ENCODE measurements at regions of chr1 and their contacts with region 1.

Region 1: DNA sequence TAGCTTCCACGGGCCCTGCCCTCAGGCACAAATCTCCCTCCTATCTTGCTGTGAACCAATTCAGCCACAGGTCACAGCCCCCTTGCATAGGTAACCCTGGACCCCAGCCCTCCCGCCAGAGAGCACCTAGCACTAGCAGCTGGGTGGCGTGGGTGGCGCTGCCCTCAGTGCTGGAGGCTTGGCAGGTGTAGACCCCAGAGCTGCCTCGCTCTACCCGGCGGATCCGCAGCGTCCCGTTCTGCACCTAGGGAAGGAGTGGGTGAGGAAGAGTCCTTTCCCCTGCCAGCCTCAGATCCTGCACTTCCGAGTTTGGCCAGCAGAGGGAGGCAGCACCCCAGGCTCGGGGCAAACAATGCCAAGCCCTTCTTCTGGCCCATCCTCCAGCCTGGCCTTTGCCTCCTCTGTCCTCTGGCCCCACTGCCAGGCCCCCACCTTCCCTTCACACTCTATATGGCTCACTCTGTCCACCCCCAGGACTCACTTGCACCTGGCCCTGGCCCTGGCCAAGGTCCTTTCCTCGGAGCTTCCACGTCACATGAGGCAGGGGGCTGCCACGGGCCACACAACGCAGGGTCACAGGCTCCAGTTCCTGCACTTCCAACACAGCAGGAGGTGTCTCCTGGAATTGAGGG is 9.0 kb downstream of the IGSF9 start:
- DNase-seq: peak; percentile 30
- ATAC-seq: peak; percentile 87
- H3K4me3 ChIP-seq: no peak overlapping the region
- H3K27ac ChIP-seq: no peak overlapping the region
- H3K4me1 ChIP-seq: peaks cover 13% of the 10 kb centered on the region
- H3K27me3 ChIP-seq: peaks cover 13 to 51% of the 10 kb centered on the region in 2 experiments; a peak in 4 of 5 replicates
- CTCF ChIP-seq: peak; percentile 99
- EP300 ChIP-seq: no peak
- POLR2A ChIP-seq: no peak
- RAD21 ChIP-seq: peak; percentile 95

Region 2: DNA sequence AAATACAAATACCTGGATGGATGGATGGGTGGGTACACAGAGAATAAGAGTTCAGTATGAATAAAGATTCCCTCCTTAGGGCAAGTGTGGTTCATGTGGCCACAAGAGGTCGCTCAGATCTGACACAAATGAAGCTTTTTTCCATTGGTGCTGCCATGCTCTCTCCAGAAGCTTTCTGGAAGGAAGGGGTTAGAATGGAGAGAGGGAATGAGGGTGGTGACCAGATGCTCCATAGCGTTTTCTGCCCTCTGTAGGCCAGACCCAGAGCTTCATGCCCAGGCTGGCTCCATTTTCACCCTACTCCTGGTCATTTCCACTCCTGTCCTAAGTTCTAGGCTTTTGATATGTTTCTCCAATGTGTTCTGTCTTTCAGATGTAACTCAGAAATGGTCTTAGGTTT is 137.5 kb before region 1 on chr1:
- CTCF ChIA-PET with region 1: no interaction called
- POLR2A ChIA-PET with region 1: no interaction called
- in situ Hi-C with region 1: no loop called
- intact Hi-C with region 1: loop called (anchors 5 kb)
- DNase-seq: peak; percentile 70
- ATAC-seq: peak; percentile 93
- H3K4me3 ChIP-seq: no peak overlapping the region
- H3K27ac ChIP-seq: no peak overlapping the region
- H3K4me1 ChIP-seq: no peaks in the 10 kb centered on the region
- H3K27me3 ChIP-seq: peaks cover 5 to 7% of the 10 kb centered on the region in 2 experiments; a peak in 2 of 5 replicates
- CTCF ChIP-seq: peak; percentile 62
- EP300 ChIP-seq: no peak
- POLR2A ChIP-seq: no peak
- RAD21 ChIP-seq: peak; percentile 47; the same call in 1 of the 2 replicates

Region 3: GRCh38 chr1:159960721-159961381 is 24.5 kb after region 1 on chr1:
- CTCF ChIA-PET with region 1: no interaction called
- POLR2A ChIA-PET with region 1: no interaction called
- in situ Hi-C with region 1: no loop called
- intact Hi-C with region 1: no loop called
- DNase-seq: no peak
- ATAC-seq: no peak
- H3K4me3 ChIP-seq: no peak overlapping the region
- H3K27ac ChIP-seq: no peak overlapping the region
- H3K4me1 ChIP-seq: no peaks in the 10 kb centered on the region
- H3K27me3 ChIP-seq: peaks cover 0 to 25% of the 10 kb centered on the region in 2 experiments; a peak in 3 of 5 replicates
- CTCF ChIP-seq: no peak
- EP300 ChIP-seq: no peak
- POLR2A ChIP-seq: no peak
- RAD21 ChIP-seq: no peak

Region 4: GRCh38 chr1:160078512-160079195 is 142.3 kb after region 1 on chr1:
- CTCF ChIA-PET with region 1: interaction called, 6 read pairs
- POLR2A ChIA-PET with region 1: no interaction called
- in situ Hi-C with region 1: loop called (anchors 5 kb)
- intact Hi-C with region 1: loop called (anchors 5 kb)
- DNase-seq: peak; percentile 61
- ATAC-seq: peak; percentile 90
- H3K4me3 ChIP-seq: 0 out of 6 replicates have a peak overlapping the region, but pooled peaks of 1 of the 3 experiments have one; percentile 32
- H3K27ac ChIP-seq: no peak overlapping the region
- H3K4me1 ChIP-seq: peaks cover 64% of the 10 kb centered on the region
- H3K27me3 ChIP-seq: no peaks in the 10 kb centered on the region
- CTCF ChIP-seq: peak; percentile 90
- EP300 ChIP-seq: no peak
- POLR2A ChIP-seq: no peak
- RAD21 ChIP-seq: peak; percentile 80

Region 5: DNA sequence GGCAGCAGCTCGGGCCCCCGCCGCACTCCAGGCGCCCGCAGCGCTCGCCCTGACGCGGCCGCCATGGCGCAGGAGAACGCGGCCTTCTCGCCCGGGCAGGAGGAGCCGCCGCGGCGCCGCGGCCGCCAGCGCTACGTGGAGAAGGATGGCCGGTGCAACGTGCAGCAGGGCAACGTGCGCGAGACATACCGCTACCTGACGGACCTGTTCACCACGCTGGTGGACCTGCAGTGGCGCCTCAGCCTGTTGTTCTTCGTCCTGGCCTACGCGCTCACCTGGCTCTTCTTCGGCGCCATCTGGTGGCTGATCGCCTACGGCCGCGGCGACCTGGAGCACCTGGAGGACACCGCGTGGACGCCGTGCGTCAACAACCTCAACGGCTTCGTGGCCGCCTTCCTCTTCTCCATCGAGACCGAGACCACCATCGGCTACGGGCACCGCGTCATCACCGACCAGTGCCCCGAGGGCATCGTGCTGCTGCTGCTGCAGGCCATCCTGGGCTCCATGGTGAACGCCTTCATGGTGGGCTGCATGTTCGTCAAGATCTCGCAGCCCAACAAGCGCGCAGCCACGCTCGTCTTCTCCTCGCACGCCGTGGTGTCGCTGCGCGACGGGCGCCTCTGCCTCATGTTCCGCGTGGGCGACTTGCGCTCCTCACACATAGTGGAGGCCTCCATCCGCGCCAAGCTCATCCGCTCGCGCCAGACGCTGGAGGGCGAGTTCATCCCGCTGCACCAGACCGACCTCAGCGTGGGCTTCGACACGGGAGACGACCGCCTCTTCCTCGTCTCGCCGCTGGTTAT is 147.8 kb after region 1 on chr1:
- CTCF ChIA-PET with region 1: interaction called, 6 read pairs
- POLR2A ChIA-PET with region 1: no interaction called
- in situ Hi-C with region 1: loop called (anchors 5 kb)
- intact Hi-C with region 1: loop called (anchors 5 kb)
- DNase-seq: no peak
- ATAC-seq: peak; percentile 20; the same call in 2 of the 3 replicates
- H3K4me3 ChIP-seq: no peak overlapping the region
- H3K27ac ChIP-seq: no peak overlapping the region
- H3K4me1 ChIP-seq: peaks cover 21% of the 10 kb centered on the region
- H3K27me3 ChIP-seq: no peaks in the 10 kb centered on the region
- CTCF ChIP-seq: peak; percentile 70
- EP300 ChIP-seq: no peak
- POLR2A ChIP-seq: no peak
- RAD21 ChIP-seq: peak; percentile 30; the same call in 1 of the 2 replicates